HEK293 (cell line): ENCODE measurements at regions of chr11 and their contacts with region 1.

Region 1: DNA sequence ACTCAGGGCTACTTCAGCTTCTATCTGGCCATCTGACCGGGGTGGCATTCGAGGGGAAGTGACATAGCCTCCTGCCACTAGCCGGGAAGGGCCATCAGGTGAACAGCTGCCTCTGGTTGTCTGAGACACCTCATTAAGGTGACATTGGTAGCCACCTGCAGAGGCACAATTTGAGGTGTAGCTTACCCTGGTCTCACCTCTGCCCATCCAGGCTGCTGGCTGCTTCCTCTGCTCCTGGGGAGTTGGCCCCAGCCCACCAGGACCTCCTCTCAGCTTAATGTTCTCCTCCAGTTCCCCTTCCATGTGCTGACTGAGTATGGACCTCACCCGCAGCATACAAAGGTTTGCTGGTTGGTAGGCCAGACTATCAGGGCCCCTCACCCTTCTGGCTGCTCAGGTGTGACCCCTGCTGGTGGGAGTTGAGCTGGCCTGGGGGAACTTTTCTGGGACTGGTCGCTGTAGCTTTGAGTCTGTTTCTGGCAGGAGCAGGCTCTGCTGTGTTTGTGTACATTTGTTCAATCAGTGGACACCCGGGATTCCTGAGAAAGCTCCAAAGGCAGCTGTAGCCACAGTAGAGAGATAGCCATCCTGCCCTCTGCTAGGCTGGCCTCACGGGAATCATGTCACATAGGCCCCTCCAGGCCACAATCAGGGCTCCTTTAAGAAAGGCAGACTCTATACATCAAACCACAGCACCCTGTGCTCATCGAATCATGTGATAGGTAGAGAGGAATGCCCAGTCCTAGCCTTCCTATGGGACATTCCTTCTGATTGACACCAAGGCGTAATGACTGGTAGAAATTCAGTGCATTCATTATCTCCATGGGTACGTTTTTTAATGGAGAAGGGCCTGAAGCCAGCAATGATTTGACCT is 295.1 kb upstream of the PLET1 start:
- H3K4me3 ChIP-seq: no peak overlapping the region
- H3K27ac ChIP-seq: no peak overlapping the region
- H3K4me1 ChIP-seq: no peaks in the 10 kb centered on the region
- CTCF ChIP-seq: peak; percentile 43; the same call in 1 of the 2 replicates

Region 2: DNA sequence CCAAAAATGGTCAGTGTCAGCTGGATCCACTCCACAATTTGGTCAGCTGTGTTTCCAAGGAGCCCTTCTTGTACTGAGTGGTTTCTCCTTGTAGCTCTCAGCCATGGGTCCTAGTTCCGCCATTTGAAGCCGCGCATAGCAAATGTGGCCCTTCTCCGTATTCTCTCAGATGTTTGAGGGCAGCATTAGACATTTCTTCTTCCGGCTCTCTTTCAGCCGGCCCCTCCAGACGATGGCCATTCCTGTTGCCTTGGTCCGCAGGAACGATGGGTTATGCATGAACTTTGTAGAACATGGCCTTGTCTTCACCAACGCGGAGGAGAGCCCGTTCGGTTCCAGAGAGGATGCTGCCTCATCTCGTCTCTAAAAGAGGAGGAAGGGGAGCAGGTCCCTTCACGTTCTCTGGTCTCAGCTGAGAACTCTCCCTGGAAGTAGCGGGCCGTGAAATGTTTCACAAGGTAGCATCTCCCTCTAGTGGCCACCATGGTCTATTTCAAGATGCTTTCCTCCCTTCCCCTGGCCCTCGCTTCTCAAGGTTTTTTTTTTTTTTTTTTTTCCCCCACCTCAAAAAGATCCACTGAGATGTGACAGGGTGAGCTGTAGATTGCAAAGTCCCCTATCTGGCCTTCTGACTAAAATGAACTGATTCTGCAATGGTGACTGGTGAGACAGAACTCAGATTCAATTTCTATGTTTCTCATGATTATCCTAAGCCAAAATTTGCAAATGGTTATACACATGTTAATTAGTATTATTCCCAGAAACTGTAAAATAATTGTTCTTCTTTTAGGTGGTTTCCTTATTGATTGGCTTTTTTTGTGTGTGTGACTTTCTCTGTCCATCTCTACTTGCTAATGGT is 275.2 kb before region 1 on chr11:
- CTCF ChIA-PET with region 1: interaction called, 14 read pairs
- POLR2A ChIA-PET with region 1: no interaction called
- H3K4me3 ChIP-seq: peak overlapping the region; percentile 26
- H3K27ac ChIP-seq: no peak overlapping the region
- H3K4me1 ChIP-seq: no peaks in the 10 kb centered on the region
- CTCF ChIP-seq: peak; percentile 76

Region 3: DNA sequence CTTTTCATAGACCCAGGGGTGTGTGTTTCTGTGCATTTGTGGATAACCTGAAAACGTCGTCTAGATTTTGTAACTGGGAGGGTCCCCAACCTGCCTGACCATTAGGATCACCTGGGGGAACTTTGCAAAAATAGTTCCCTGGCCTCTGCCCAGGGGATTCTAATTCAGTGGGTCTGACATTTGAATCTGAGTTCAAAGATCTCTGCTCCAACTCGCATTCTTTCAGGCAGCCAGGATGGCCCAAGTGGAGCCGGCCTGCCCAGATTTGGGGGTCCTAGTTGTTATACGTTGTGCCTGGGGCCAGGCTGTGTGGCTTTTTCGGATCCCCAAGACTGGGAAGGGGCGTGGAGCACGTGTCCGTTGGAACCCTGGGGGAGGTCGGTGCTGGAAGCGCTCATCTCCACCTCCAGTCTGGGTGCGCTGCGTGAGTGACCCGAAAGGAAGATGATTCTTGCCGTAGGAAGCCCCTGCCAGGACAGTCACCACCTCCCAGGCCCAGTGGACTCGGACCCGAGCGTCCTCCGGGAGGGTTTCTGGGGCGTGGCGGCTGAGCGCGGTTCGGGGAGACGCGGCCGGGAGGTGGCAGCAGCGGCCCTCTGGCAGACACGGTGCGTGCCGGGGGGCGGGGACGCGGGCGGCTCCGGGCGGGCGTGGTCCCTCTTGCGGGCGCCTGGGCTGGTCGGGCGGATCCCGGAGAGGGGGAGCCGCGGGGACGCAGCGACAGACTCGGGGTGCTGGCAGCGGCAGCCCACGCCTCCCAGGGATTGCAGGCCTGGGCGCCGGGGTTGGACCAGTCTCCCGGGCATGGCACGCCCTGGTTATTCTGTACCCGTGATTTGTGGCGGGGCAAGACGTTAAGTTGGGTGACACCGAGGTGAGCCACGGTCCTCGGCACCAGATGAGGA is 265.9 kb before region 1 on chr11:
- CTCF ChIA-PET with region 1: interaction called, 17 read pairs
- POLR2A ChIA-PET with region 1: no interaction called
- H3K4me3 ChIP-seq: peak overlapping the region; percentile 53
- H3K27ac ChIP-seq: no peak overlapping the region
- H3K4me1 ChIP-seq: no peaks in the 10 kb centered on the region; the same call in 1 of the 2 replicates
- CTCF ChIP-seq: peak; percentile 66

Region 4: DNA sequence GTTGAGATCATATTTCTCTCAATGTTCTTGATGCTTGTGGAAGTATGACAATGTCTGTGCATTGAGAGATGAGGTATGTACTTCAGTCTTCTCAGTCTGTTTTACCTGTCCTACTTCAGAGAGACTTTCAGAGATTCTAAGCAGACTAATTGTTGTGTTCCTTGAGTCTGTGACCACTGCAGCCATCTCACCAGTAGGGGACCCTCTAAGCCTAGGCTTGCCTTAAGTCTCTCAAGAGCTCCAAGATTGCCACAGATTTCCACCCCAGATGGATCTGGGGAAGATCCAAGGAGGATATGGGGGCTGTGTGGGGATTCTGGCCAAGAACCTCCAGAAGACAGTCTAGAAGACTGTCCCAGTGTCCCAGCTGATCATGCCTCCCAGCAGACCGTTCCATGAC is 115.2 kb before region 1 on chr11:
- CTCF ChIA-PET with region 1: interaction called, 29 read pairs
- POLR2A ChIA-PET with region 1: no interaction called
- H3K4me3 ChIP-seq: no peak overlapping the region
- H3K27ac ChIP-seq: no peak overlapping the region
- H3K4me1 ChIP-seq: no peaks in the 10 kb centered on the region
- CTCF ChIP-seq: no peak

Region 5: DNA sequence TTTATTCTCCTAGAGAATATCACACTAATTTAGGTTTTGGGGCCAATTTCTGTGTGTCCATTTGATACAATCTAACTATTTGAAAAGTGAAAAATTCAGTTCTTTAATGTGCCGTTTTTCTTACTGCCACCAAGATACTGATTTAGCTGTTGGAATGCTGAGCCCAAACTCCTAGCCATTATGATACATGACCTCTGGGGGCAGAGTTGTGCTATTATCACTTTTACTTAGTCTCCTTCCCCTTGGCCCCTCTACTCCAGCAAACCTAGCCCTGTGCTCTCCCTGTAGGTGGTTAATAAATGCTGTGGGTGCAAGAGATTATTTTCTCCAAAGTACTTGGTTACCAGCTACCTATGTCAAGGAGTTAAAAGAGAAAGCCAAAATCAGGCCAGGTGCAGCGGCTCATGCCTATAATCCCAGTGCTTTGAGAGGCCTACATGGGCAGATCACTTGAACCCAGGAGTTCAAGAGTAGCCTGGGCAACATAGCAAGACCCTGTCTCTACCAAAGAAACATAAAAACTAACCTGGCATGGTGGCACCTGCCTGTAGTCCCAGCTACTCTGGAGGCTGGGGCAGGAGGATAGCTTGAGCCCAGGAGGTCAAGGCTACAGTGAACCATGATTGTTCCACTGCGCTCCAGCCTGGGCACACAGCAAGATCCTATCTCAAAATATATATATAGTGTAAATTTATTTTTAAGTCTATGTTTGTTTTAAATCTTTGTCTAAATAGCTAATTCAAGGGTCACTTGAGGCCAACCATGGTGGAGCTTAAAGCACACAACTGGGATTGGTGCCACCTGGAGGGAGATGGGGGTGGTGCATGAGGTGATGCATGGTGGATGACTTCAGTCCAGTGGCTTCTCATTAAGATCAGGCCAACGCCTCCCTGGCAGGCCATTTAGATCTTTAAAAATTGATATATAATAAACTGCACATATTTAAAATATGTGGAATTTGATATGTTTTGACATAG is 101.8 kb before region 1 on chr11:
- CTCF ChIA-PET with region 1: interaction called, 17 read pairs
- POLR2A ChIA-PET with region 1: no interaction called
- H3K4me3 ChIP-seq: no peak overlapping the region
- H3K27ac ChIP-seq: no peak overlapping the region
- H3K4me1 ChIP-seq: no peaks in the 10 kb centered on the region
- CTCF ChIP-seq: no peak

Region 6: GRCh38 chr11:112537846-112538330 is 17.8 kb before region 1 on chr11:
- CTCF ChIA-PET with region 1: interaction called, 18 read pairs
- POLR2A ChIA-PET with region 1: no interaction called
- H3K4me3 ChIP-seq: no peak overlapping the region
- H3K27ac ChIP-seq: no peak overlapping the region
- H3K4me1 ChIP-seq: no peaks in the 10 kb centered on the region
- CTCF ChIP-seq: no peak

Region 7: GRCh38 chr11:112570333-112570732 is 14.6 kb after region 1 on chr11:
- CTCF ChIA-PET with region 1: interaction called, 20 read pairs
- POLR2A ChIA-PET with region 1: interaction called, 5 read pairs
- H3K4me3 ChIP-seq: no peak overlapping the region
- H3K27ac ChIP-seq: no peak overlapping the region
- H3K4me1 ChIP-seq: no peaks in the 10 kb centered on the region; the same call in 1 of the 2 replicates
- CTCF ChIP-seq: no peak